Adrenal gland (tissue), 19 donors: ENCODE measurements at regions of chr4 and their contacts with region 1.

Region 1: DNA sequence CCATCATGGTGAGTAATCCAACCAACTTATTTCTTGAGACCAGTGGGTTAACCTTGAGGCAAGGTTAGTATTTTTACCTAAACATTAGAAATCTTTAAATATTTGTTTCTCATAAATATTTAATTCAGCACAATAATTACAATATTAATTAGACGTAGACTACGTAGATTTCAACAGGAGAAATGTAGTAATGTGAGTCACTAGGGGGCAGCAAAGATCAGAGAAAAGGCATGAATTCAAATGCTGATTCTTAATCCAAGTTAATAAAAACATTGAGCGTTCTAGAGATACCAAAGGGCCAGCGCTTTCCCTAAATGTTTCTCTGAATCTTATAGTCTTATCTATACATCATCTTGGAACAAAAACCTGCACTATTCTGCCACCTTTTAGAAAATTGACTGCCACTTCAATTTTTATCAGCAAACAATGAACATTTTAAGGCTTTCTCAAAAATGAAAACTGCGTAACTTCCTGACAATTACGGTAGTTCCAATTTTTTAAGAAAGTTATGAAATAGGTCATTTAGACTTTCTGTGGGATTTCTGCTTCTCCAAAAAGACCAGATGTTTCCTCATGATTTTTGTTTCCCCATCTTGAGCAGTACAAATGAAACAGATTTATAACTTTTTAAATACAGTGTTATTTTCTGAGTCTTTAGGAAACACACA is 180.7 kb downstream of the GASK1B start:
- DNase-seq: peak in 5 of 7 donors; percentile 53 to 76 (median 70)
- H3K4me3 ChIP-seq: peak overlapping the region in 2 of 4 donors; percentile 16 to 46
- H3K27ac ChIP-seq: peak overlapping the region; percentile 19 to 86 (median 75)
- H3K4me1 ChIP-seq: peaks cover 30 to 45% of the 10 kb centered on the region in 2 donors
- H3K27me3 ChIP-seq: no peaks in the 10 kb centered on the region
- CTCF ChIP-seq: peak; percentile 65 to 91 (median 82)
- POLR2A ChIP-seq: no peak

Region 2: DNA sequence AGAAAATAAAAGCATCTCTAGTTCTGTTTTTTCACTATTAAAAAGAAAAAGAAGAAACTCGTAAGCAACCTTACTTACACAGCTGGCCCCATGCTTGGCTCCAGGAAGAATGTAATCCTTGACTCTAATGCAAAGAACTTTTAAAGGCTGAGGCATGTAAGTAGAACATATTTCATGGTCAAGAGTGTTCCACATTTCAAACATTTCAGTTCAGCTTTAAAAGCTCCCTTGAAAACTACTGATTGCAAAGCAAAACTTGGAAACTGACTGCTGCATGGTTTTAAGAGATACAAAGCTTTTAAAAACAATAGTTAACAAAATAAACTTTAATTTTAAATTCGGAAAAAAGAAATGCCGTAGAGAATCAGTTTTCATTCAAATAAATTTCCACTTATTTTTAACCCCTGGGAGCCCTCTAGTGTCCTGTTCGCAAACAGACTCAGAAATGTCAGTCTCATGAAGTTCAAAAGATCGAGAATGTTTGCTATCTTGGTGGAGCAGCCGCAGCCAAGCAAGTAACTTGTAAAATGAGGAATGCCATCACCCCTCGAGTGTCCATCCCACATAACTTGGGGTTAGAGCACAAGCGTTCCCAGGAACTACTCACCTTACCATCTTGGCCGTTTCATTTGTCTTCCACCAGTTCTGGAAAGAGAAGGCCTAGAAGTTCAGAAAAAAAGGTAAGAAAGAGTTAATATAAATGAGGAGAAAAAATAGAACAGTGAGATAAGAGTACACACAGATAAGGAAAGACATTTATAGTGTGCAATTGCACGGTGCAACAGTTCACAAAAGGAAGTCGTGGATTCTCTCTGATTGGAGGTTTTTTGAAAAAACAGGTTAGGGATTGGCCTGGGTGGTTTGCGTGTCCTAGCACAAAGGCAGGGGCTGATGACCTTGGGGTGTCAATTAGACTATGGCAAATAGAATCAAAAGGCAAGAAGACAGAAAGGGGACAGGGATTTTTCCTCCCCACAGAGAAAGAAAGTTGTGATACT is 180.4 kb after region 1 on chr4 and contains the start of gene GASK1B:
- intact Hi-C with region 1: loop called (anchors 5 kb)
- DNase-seq: peak; percentile 65 to 86 (median 81)
- H3K4me3 ChIP-seq: peak within 1 kb of the TSS in 3 of 4 donors; percentile 55 to 81 (median 81)
- H3K27ac ChIP-seq: peak within 1 kb of the TSS; percentile 68 to 94 (median 87)
- H3K4me1 ChIP-seq: peaks cover 26 to 50% of the 10 kb centered on the region in 2 donors
- H3K27me3 ChIP-seq: no peaks in the 10 kb centered on the region
- CTCF ChIP-seq: peak; percentile 26 to 74 (median 60)
- POLR2A ChIP-seq: peak; percentile 32 to 79
- total RNA-seq, gene GASK1B: 120 to 556 (median 408) TPM